ENCODE measurements at regions of chr16 and their contacts with region 1.

Region 1: GRCh38 chr16:68732036-68732680 is 4.9 kb upstream of the CDH1 start:
- DNase-seq: peak in 1 of 2 experiments; percentile 63
- H3K4me3 ChIP-seq: peak overlapping the region in 1 of 4 experiments; percentile 9; a peak in 2 of 8 replicates
- H3K27ac ChIP-seq: peak overlapping the region; percentile 48; the same call in 1 of the 2 replicates
- H3K4me1 ChIP-seq: peaks cover 0 to 6% (median 2%) of the 10 kb centered on the region in 4 experiments; a peak in 3 of 7 replicates
- H3K27me3 ChIP-seq: no peaks in the 10 kb centered on the region
- CTCF ChIP-seq: no peak
- EP300 ChIP-seq: no peak
- POLR2A ChIP-seq: no peak
- RAD21 ChIP-seq: no peak

Region 2: GRCh38 chr16:68744369-68745280 is 12.5 kb after region 1 on chr16:
- CTCF ChIA-PET with region 1: interaction called, 8 read pairs
- POLR2A ChIA-PET with region 1: interaction called, 10 read pairs
- DNase-seq: peak in 1 of 2 experiments; percentile 63
- H3K4me3 ChIP-seq: peak overlapping the region in 3 of 4 experiments; percentile 5 to 39 (median 7); a peak in 5 of 8 replicates
- H3K27ac ChIP-seq: peak overlapping the region; percentile 63
- H3K4me1 ChIP-seq: peaks cover 8 to 29% (median 18%) of the 10 kb centered on the region in 4 experiments
- H3K27me3 ChIP-seq: no peaks in the 10 kb centered on the region
- CTCF ChIP-seq: no peak
- EP300 ChIP-seq: peak in 1 of 2 experiments; percentile 61; a peak in 1 of 3 replicates
- POLR2A ChIP-seq: no peak
- RAD21 ChIP-seq: 0 out of 4 replicates have a peak, but pooled peaks of 1 of the 2 experiments have one; percentile 18